CD8-positive, alpha-beta T cell (primary cell): ENCODE measurements at regions of chr1 and their contacts with region 1.

Region 1: GRCh38 chr1:155744711-155745283 is 55.9 kb downstream of the DAP3 start:
- DNase-seq: no peak
- ATAC-seq: no peak
- H3K4me3 ChIP-seq: peak overlapping the region; percentile 62 to 86
- H3K4me3 Mint-ChIP-seq: peak overlapping the region; percentile 94
- H3K27ac ChIP-seq: peak overlapping the region; percentile 64 to 70
- H3K27ac Mint-ChIP-seq: peak overlapping the region; percentile 95
- H3K4me1 ChIP-seq: peaks cover 6% of the 10 kb centered on the region
- H3K4me1 Mint-ChIP-seq: peaks cover 3% of the 10 kb centered on the region
- H3K27me3 ChIP-seq: no peaks in the 10 kb centered on the region
- H3K27me3 Mint-ChIP-seq: no peaks in the 10 kb centered on the region
- CTCF ChIP-seq: no peak

Region 2: GRCh38 chr1:155688324-155689080 is 56.3 kb before region 1 on chr1 and contains the start of gene YY1AP1:
- CTCF ChIA-PET with region 1: no interaction called
- POLR2A ChIA-PET with region 1: no interaction called
- intact Hi-C with region 1: loop called (anchors 1 to 2 kb)
- DNase-seq: peak; percentile 82 to 95 (median 91)
- ATAC-seq: peak; percentile 86
- H3K4me3 ChIP-seq: peak within 1 kb of the TSS; percentile 91 to 97
- H3K4me3 Mint-ChIP-seq: peak within 1 kb of the TSS; percentile 96
- H3K27ac ChIP-seq: peak within 1 kb of the TSS; percentile 92 to 96
- H3K27ac Mint-ChIP-seq: peak within 1 kb of the TSS; percentile 97
- H3K4me1 ChIP-seq: peaks cover 46% of the 10 kb centered on the region
- H3K4me1 Mint-ChIP-seq: peaks cover 68% of the 10 kb centered on the region
- H3K27me3 ChIP-seq: no peaks in the 10 kb centered on the region
- H3K27me3 Mint-ChIP-seq: no peaks in the 10 kb centered on the region
- CTCF ChIP-seq: no peak
- total RNA-seq, gene YY1AP1: 122 to 138 TPM